H1 (cell line): ENCODE measurements at regions of chr5 and their contacts with region 1.

Region 1: DNA sequence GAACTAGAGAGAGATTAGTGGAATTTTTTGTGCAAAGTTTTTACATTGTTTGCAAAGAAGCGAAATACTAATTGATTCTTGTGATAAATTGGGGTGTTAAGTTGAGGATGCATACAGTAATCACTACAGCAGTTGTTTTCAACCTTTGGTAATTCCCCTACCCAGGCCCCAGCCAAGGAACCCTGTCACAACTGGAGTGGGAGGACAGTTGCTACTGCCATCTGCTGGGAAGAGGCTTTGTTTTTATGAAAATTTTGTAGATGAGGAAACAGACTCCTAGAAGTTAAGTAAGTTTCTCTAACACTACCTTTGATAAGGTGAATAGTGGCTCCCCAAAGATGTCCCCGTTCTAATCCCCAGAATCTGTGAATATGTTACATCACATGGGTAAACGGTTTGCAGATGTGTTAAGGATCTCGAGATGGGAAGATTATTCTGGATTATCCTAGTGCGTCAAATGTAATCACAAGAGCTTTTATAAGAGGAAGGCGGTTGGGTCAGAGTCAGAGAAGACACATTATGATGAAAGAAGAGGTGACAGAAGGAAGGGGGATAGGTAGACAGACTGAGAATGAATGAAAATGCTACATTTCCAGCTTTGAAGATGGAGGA is 34.0 kb upstream of the PPP1R2B start:
- DNase-seq: no peak
- H3K4me3 ChIP-seq: no peak overlapping the region
- H3K27ac ChIP-seq: no peak overlapping the region
- H3K4me1 ChIP-seq: peaks cover 0 to 9% (median 2%) of the 10 kb centered on the region in 4 experiments; a peak in 3 of 7 replicates
- H3K27me3 ChIP-seq: peaks cover 0 to 2% (median 0%) of the 10 kb centered on the region in 4 experiments; a peak in 1 of 7 replicates
- CTCF ChIP-seq: peak; percentile 25 to 73 (median 61)
- EP300 ChIP-seq: no peak
- POLR2A ChIP-seq: no peak
- RAD21 ChIP-seq: peak; percentile 90 to 94

Region 2: DNA sequence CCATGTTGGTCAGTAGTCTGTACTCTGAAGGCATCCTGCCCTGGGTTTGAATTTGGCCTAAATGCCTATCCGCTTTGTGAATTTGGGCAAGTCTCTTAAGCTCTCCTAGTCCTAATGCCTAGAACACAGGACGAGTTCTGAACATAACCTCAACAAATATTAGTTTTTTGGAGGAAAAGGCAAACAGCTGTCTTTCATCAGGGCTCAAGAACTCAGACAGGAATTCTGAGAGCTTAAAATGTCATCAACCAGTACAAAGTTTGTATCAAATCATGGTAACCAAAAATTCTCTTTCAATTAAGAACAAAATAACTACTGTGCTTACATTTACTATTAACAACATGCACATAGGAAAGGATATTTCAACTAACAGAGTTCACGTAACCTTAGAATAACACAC is 148.5 kb before region 1 on chr5:
- CTCF ChIA-PET with region 1: interaction called, 24 read pairs
- POLR2A ChIA-PET with region 1: no interaction called
- DNase-seq: no peak
- H3K4me3 ChIP-seq: no peak overlapping the region
- H3K27ac ChIP-seq: no peak overlapping the region
- H3K4me1 ChIP-seq: peaks cover 0 to 4% (median 0%) of the 10 kb centered on the region in 4 experiments; a peak in 1 of 7 replicates
- H3K27me3 ChIP-seq: no peaks in the 10 kb centered on the region
- CTCF ChIP-seq: no peak
- EP300 ChIP-seq: no peak
- POLR2A ChIP-seq: no peak
- RAD21 ChIP-seq: no peak